Activated naive CD4-positive, alpha-beta T cell treated with anti-CD3 and anti-CD28 coated beads, Interleukin-2, amount 10 ng/mL, durations not matched to agents 7 days and 5 days (primary cell): ENCODE measurements at regions of chr6 and their contacts with region 1.

Region 1: DNA sequence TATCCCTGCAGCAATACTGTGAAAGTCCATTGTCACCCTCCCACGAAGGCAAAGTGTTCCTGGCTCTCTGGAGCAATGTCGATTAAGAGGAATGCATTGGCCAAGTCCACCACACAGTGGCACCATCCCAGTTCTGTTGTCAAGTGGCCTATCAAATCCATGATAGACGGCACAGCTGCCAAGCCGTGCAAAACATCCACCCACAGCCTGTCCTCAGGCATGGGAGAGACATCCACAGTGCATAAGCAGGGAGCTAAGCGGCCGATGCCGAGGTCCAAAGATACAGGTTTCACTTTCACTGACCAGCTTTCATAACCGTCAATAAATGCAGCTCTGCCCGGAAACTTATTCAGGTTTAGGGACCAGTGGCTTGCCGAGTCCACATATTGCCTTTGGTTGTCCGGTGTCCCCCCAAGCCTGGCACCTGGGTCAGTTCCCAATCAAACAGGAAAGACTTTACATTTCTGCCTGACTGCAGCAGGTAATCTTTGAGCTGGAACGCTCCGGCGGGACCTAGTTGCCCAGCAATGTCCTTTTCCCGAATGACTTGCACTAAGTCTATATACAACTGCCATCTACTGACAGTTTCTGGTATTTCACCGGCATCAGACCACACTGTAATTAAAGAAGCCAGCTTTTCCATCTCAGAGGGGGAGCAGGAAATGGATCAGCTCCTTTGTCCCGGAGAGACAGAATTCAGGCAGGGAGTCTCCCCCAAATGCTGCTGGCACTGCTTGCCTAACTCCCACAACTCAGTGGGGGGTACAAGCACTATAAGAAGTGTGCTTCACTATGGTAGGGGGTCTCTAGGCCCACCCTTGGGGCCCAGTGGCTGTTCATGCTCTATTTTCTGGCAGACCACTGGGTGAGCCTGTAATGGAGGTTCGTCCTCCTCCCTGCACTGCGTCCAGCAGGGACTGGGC is 6.3 kb downstream of the ZKSCAN3 start:
- DNase-seq: peak; percentile 72
- H3K4me3 Mint-ChIP-seq: peak overlapping the region; percentile 90
- H3K27ac Mint-ChIP-seq: peak overlapping the region; percentile 86
- H3K4me1 Mint-ChIP-seq: peaks cover 35% of the 10 kb centered on the region
- H3K27me3 Mint-ChIP-seq: peaks cover 4% of the 10 kb centered on the region

Region 2: GRCh38 chr6:28136585-28137504 is 219.2 kb before region 1 on chr6:
- CTCF ChIA-PET with region 1: interaction called, 16 read pairs
- DNase-seq: peak; percentile 76
- H3K4me3 Mint-ChIP-seq: peak overlapping the region; percentile 93
- H3K27ac Mint-ChIP-seq: peak overlapping the region; percentile 91
- H3K4me1 Mint-ChIP-seq: peaks cover 74% of the 10 kb centered on the region
- H3K27me3 Mint-ChIP-seq: no peaks in the 10 kb centered on the region

Region 3: DNA sequence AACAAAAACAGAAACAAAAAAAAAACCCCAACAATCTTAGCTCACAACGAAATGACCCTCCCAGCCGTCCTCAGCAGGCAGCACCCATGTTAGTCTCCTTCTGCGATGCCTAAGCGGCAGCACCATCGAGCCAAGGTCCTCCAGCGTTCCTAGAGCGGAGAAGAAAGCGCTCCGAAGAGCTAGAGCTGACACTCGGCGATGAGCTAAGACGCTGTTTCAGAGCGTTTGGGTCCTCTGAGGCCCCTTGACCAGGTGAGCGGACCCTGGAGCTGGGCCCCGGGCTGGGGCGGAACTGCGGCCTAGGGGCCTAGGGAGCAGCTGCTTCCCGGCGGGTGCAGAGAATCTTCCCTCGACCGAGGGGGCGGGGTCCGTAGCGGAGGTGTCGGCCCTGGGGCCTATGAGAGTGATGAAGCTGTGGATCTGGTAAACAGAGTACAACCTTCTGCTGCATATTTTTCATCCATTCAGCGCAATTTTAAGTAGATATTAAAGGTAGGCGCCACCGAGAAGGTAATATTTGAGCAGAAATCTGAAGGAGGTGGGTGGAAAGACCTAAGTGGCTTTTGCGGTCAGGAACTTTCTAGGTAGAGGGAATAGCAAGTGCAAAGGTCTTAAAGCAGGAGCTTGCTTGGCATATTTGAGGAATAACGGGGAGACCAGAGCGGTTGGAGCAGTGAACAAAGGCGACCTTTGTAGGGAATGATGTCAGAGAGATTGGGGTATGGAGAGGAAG is 88.9 kb before region 1 on chr6 and contains the start of gene ZSCAN26:
- CTCF ChIA-PET with region 1: interaction called, 10 read pairs
- DNase-seq: peak; percentile 90
- H3K4me3 Mint-ChIP-seq: no peak within 1 kb of the TSS
- H3K27ac Mint-ChIP-seq: no peak within 1 kb of the TSS
- H3K4me1 Mint-ChIP-seq: peaks cover 12% of the 10 kb centered on the region
- H3K27me3 Mint-ChIP-seq: peaks cover 2% of the 10 kb centered on the region

Region 4: DNA sequence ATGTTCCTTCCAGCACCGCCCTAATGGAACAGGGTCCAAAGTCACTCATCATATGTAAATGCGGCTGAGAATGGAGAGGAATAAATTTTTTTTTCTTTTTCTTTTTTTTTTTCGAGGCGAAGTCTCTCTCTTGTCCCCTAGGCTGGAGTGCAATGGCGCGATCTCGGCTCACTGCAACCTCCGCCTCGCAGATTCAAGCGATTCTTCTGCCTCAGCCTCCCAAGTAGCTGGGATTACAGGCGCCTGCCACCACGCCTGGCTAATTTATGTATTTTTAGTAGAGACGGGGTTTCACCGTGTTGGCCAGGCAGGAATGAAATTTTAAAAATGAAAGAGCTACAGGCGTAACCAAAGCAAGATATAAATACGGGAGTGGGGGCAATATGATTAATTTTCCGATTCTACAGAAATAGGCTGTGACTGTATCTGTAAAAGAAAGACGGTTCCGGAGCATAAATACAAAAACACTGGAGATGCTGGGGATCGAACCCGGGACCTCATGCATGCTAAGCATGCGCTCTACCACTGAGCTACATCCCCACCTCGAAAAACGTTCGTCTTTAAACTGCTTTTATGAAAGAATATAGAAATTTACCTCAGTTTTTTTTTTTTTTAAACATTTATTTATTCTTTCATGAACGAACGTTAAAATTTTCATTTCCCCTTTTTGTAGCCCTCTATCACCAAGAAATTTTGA is 301.9 kb after region 1 on chr6:
- CTCF ChIA-PET with region 1: no interaction called
- DNase-seq: peak; percentile 50
- H3K4me3 Mint-ChIP-seq: peak overlapping the region; percentile 66
- H3K27ac Mint-ChIP-seq: peak overlapping the region; percentile 64
- H3K4me1 Mint-ChIP-seq: peaks cover 23% of the 10 kb centered on the region
- H3K27me3 Mint-ChIP-seq: peaks cover 54% of the 10 kb centered on the region